RWPE1 (cell line): ENCODE measurements at regions of chr5 and their contacts with region 1.

Region 1: DNA sequence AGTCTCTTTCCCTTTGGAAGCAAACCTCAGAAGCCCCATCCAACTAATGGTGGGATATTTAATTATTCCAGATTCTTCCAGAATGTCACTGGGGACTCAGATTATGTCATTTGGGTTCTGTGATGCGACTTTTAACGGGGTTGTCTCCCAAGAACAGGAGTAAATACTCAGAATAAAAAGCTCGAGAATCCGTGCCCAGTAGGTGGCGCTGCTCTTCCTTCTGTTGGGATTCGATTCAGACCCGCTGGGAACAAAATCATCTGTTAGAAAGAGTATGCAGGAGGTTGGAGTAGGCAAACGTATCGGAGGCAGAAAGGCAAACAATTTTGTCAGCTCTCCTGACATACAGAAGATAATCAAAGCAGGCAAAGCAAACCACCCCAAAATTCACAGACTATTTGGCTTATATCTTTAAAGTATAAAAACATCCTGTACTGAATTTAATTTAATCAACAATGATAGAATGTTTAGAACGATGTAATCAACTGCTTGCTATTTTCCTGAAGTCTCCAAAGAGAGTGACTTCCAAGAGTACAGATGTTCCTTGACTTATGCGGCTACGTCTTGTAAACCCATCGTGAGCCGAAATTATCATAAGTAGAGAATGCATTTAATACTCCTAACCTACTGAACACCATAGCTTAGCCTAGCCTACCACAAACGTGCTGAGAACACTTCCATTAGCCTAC is 169.8 kb upstream of the RAI14 start:
- DNase-seq: peak; percentile 86
- H3K27ac ChIP-seq: no peak overlapping the region
- CTCF ChIP-seq: peak; percentile 94

Region 2: GRCh38 chr5:34447424-34447823 is 38.9 kb before region 1 on chr5:
- CTCF ChIA-PET with region 1: no interaction called
- POLR2A ChIA-PET with region 1: no interaction called
- DNase-seq: no peak
- H3K27ac ChIP-seq: no peak overlapping the region
- CTCF ChIP-seq: no peak

Region 3: GRCh38 chr5:34474573-34475021 is 11.7 kb before region 1 on chr5:
- CTCF ChIA-PET with region 1: interaction called, 25 read pairs
- POLR2A ChIA-PET with region 1: no interaction called
- DNase-seq: peak; percentile 57
- H3K27ac ChIP-seq: no peak overlapping the region
- CTCF ChIP-seq: peak; percentile 99

Region 4: DNA sequence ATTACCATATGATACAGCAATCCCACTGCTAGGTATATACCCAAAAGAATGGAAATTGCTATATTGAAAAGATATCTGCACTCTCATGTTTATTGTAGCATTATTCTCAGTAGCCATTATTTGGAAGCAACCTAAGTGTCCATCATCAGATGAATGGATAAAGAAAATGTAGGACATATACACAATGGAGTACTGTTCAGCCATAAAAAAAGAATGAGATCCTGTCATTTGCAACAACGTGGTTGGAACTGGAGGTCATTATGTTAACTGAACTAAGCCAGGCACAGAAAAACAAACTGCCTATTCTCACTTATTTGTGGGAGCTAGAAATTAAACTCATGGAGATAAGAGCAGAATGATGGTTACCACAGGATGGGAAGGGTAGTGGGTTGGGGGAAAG is 289.6 kb after region 1 on chr5:
- CTCF ChIA-PET with region 1: no interaction called
- POLR2A ChIA-PET with region 1: no interaction called
- DNase-seq: no peak
- H3K27ac ChIP-seq: no peak overlapping the region
- CTCF ChIP-seq: no peak

Region 5: GRCh38 chr5:34898258-34898895 is 412.1 kb after region 1 on chr5:
- CTCF ChIA-PET with region 1: interaction called, 22 read pairs
- POLR2A ChIA-PET with region 1: no interaction called
- DNase-seq: peak; percentile 69
- H3K27ac ChIP-seq: no peak overlapping the region
- CTCF ChIP-seq: peak; percentile 94